HEK293 (cell line): ENCODE measurements at regions of chr22 and their contacts with region 1.

Region 1: GRCh38 chr22:49960159-49961004 is at the start of gene PIM3:
- H3K4me3 ChIP-seq: peak within 1 kb of the TSS; percentile 83
- H3K27ac ChIP-seq: peak within 1 kb of the TSS; percentile 99
- H3K4me1 ChIP-seq: peaks cover 12% of the 10 kb centered on the region
- CTCF ChIP-seq: no peak

Region 2: DNA sequence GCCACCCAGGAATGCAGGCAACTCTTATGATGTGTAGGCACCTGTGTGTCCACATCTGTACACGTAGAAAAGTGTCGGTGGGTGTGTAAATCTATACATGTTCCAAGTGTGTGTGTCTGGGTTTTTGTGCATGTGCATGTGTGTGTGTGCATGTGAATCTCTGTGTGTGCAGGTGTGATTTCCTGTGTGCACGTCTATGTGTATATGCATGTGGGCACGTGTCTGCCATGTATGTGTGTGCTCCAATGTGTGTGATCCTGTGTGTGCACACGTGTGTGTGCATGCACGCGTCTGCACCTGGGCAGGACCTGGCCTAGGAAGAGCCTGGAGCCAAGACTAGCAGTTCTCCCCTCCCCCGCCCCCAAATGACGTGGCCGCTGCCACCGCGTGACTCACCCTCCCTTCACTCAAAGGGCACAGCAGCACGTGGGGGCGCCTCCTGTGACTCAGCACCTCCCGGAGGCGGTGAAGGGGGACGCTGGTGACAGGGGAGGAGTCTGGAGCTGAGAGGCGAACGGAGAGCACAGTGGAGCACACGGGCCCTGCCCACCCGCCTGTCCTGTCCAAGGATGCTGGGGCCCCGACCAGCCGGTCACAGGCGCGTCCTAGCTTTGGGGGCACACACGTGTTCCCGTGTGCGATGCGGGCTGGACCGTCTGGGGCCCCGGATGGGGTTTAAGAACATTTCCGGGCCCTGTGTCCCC is 10.3 kb after region 1 on chr22:
- CTCF ChIA-PET with region 1: interaction called, 5 read pairs
- POLR2A ChIA-PET with region 1: interaction called, 26 read pairs
- H3K4me3 ChIP-seq: peak overlapping the region; percentile 25
- H3K27ac ChIP-seq: peak overlapping the region; percentile 61
- H3K4me1 ChIP-seq: peaks cover 3% of the 10 kb centered on the region; the same call in 1 of the 2 replicates
- CTCF ChIP-seq: no peak; the same call in 1 of the 2 replicates